Activated B cell treated with CpG ODN at 0.5 μM for 24 hours (primary cell): ENCODE measurements at regions of chr5 and their contacts with region 1.

Region 1: GRCh38 chr5:102792705-102793104 is 37.6 kb downstream of the PAM start:
- DNase-seq: no peak
- ATAC-seq: no peak
- H3K4me3 Mint-ChIP-seq: no peak overlapping the region
- H3K27ac Mint-ChIP-seq: no peak overlapping the region
- H3K4me1 Mint-ChIP-seq: no peaks in the 10 kb centered on the region
- H3K27me3 Mint-ChIP-seq: peaks cover 2% of the 10 kb centered on the region
- CTCF ChIP-seq: no peak

Region 2: DNA sequence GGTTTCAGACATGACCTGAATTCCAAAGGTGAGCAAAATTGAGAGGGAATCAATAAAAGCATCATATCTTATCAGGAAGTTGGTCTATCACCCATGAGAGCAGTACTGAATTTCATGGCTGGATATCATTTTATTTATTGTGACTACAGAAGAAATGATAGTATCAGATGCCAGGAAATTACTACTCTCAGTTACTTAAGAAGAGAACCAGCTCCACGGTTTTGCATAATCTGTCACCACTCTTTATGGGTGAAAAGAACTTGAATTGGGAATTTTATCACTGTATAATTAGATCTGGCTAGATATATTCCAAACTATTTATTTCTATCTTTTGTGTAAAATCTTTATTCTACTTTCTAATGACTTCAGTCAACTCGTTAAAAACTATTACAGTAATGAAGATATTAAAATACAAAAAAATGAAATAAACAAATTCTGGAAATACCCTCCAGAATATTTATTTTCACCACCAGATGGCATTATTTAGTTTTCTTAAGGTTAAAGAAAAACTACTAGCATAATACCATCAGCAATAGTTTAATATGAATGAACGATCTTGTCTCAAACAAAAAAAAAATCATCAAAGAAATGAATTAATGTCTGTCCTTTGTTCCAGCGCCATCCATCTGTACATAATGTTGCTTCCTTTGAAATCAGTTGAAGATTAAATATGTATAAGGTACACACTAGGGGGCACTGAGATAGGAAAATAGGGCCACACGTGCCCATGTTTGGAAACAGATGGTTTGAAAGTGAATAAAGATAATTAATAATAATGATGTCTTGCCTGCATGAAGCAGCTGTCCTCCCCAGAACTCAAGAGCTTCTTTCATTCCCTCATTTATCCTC is 209.2 kb before region 1 on chr5:
- CTCF ChIA-PET with region 1: no interaction called
- POLR2A ChIA-PET with region 1: no interaction called
- intact Hi-C with region 1: loop called (anchors 1 kb)
- DNase-seq: no peak
- ATAC-seq: no peak
- H3K4me3 Mint-ChIP-seq: no peak overlapping the region
- H3K27ac Mint-ChIP-seq: no peak overlapping the region
- H3K4me1 Mint-ChIP-seq: peaks cover 1% of the 10 kb centered on the region
- H3K27me3 Mint-ChIP-seq: no peaks in the 10 kb centered on the region
- CTCF ChIP-seq: peak; percentile 32

Region 3: GRCh38 chr5:102681407-102681983 is 111.2 kb before region 1 on chr5:
- CTCF ChIA-PET with region 1: no interaction called
- POLR2A ChIA-PET with region 1: no interaction called
- intact Hi-C with region 1: loop called (anchors 5 kb)
- DNase-seq: no peak
- ATAC-seq: peak; percentile 31
- H3K4me3 Mint-ChIP-seq: no peak overlapping the region
- H3K27ac Mint-ChIP-seq: no peak overlapping the region
- H3K4me1 Mint-ChIP-seq: no peaks in the 10 kb centered on the region
- H3K27me3 Mint-ChIP-seq: no peaks in the 10 kb centered on the region
- CTCF ChIP-seq: no peak

Region 4: DNA sequence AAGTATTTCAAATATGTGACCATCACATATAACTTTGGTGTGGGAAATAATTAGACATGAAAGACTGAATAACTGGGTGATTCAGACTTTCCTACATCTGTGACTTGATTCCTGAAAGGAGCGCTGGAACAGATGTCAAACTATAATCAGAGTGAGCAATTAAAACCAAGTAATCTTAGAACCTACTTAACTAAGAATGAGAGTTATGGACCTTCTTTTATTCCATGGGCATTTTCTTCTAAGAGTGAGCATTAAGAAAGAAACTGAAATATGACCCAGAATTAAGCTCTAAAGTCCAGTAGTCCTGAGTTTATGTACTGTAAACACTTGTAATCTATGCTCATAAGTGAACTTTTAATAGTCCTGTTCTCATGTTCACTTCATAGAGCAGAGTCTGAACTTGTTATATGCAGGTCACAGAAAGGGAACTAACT is 30.8 kb after region 1 on chr5:
- CTCF ChIA-PET with region 1: no interaction called
- POLR2A ChIA-PET with region 1: no interaction called
- intact Hi-C with region 1: no loop called
- DNase-seq: no peak
- ATAC-seq: no peak
- H3K4me3 Mint-ChIP-seq: no peak overlapping the region
- H3K27ac Mint-ChIP-seq: no peak overlapping the region
- H3K4me1 Mint-ChIP-seq: no peaks in the 10 kb centered on the region
- H3K27me3 Mint-ChIP-seq: no peaks in the 10 kb centered on the region
- CTCF ChIP-seq: no peak